Cardiac septum (tissue), 1 donor: ENCODE measurements at regions of chr1 and their contacts with region 1.

Region 1: DNA sequence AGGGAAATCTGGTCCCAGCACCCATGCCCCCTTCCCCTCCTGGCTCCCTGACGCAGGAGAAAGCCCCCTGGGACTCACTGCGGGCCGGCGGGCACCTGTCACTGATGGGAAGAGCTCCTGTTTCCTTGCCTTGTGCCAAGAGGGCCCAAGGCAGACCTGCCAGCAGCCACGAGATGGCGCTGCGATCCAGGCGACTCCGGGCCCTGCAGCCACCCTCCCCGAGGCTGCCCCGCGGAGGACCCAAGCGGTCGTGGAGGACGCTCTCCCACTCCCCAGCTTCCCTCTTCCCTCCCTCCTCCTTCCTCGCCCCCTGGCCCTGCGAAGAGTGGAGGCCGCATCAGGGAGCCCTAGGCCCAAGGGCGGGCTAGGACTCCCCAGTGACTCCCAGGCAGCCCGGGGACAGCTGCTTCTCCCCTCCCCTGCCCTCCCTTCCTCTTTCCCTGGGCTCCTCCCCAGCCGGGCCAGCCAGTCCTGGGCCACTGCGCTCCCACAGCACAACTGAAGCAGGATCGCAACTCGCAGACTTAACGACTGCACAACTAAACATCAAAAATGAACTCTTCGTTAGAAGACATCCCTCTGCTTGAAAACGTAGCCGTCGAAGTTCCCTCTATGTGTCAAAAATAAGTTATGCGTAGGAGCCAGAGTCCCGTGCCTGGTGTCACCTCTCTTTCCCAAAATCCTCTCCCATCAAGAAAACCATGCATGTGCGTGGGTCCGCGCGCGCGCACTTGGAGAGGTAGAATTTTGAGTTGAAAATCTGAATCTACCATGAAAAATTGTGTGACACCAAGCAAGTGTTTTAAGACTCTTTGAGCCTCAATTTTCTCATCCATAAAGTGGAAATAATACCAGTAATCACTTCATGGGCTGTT is 34.2 kb downstream of the BATF3 start:
- DNase-seq: peak; percentile 94

Region 2: GRCh38 chr1:212700892-212701819 is 35.7 kb after region 1 on chr1:
- intact Hi-C with region 1: loop called (anchors 2 kb)
- DNase-seq: peak; percentile 79

Region 3: GRCh38 chr1:212791676-212792395 is 126.4 kb after region 1 on chr1 and contains the starts of genes NSL1 and TATDN3:
- intact Hi-C with region 1: loop called (anchors 5 kb)
- DNase-seq: peak; percentile 96
- total RNA-seq, gene NSL1: 27.0 TPM
- total RNA-seq, gene TATDN3: 22.4 TPM

Region 4: GRCh38 chr1:212981571-212982328 is 316.3 kb after region 1 on chr1:
- intact Hi-C with region 1: loop called (anchors 10 kb)
- DNase-seq: no peak